Naive thymus-derived CD4-positive, alpha-beta T cell (primary cell): ENCODE measurements at regions of chr7 and their contacts with region 1.

Region 1: DNA sequence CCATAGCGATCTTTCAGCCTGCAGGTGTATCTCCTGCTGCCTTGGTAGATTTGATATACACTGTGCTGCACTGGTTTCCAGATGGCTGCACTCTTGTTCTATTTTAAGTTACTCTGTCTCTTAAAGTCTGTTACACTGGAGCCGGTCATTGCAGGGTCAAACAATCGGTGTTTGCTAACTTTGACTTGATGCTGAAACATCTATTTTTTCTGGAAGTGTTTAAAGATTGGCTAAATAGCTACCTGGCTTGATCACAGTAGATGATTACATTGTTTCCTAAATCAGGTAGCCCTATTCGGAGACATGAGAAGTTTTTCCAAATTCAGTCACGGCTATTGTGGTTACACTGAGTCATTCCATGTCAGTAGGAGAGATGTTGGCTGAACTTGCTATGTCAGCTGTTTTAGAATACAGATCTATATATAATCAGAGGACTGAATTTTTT is 574.8 kb downstream of the ETV1 start:
- DNase-seq: no peak
- ATAC-seq: no peak
- H3K4me3 ChIP-seq: no peak overlapping the region
- H3K4me3 Mint-ChIP-seq: no peak overlapping the region
- H3K27ac ChIP-seq: no peak overlapping the region
- H3K27ac Mint-ChIP-seq: no peak overlapping the region
- H3K4me1 ChIP-seq: no peaks in the 10 kb centered on the region
- H3K4me1 Mint-ChIP-seq: no peaks in the 10 kb centered on the region
- H3K27me3 ChIP-seq: no peaks in the 10 kb centered on the region
- H3K27me3 Mint-ChIP-seq: no peaks in the 10 kb centered on the region

Region 2: GRCh38 chr7:13236026-13236425 is 178.7 kb before region 1 on chr7:
- CTCF ChIA-PET with region 1: no interaction called
- POLR2A ChIA-PET with region 1: no interaction called
- intact Hi-C with region 1: no loop called
- DNase-seq: no peak
- ATAC-seq: no peak
- H3K4me3 ChIP-seq: no peak overlapping the region
- H3K4me3 Mint-ChIP-seq: no peak overlapping the region
- H3K27ac ChIP-seq: no peak overlapping the region
- H3K27ac Mint-ChIP-seq: no peak overlapping the region
- H3K4me1 ChIP-seq: no peaks in the 10 kb centered on the region
- H3K4me1 Mint-ChIP-seq: no peaks in the 10 kb centered on the region
- H3K27me3 ChIP-seq: no peaks in the 10 kb centered on the region
- H3K27me3 Mint-ChIP-seq: peaks cover 0 to 20% (median 4%) of the 10 kb centered on the region in 5 donors

Region 3: GRCh38 chr7:13447637-13448036 is 33.0 kb after region 1 on chr7:
- CTCF ChIA-PET with region 1: no interaction called
- POLR2A ChIA-PET with region 1: no interaction called
- intact Hi-C with region 1: loop called in 1 of 2 experiments (anchors 1 kb)
- DNase-seq: no peak
- ATAC-seq: no peak
- H3K4me3 ChIP-seq: no peak overlapping the region
- H3K4me3 Mint-ChIP-seq: no peak overlapping the region
- H3K27ac ChIP-seq: no peak overlapping the region
- H3K27ac Mint-ChIP-seq: no peak overlapping the region
- H3K4me1 ChIP-seq: no peaks in the 10 kb centered on the region
- H3K4me1 Mint-ChIP-seq: no peaks in the 10 kb centered on the region
- H3K27me3 ChIP-seq: no peaks in the 10 kb centered on the region
- H3K27me3 Mint-ChIP-seq: no peaks in the 10 kb centered on the region

Region 4: DNA sequence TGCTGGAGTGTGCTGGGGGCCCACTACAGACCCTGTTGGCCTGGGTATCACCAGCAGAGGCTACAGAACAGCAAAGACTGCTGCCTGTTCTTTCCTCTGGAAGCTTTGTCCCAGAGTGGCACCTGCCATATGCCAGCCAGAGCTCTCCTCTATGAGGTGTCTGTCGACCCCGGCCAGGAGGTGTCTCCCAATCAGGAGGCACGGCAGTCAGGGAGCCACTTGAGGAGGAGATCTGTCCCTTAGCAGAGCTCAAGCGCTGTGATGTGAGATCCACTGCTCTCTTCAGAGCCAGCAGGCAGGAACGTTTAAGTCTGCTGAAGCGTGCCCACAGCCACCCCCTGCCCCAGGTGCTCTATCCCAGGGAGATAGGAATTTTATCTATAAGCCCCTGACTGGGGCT is 258.6 kb after region 1 on chr7:
- CTCF ChIA-PET with region 1: no interaction called
- POLR2A ChIA-PET with region 1: no interaction called
- intact Hi-C with region 1: no loop called
- DNase-seq: no peak
- ATAC-seq: no peak
- H3K4me3 ChIP-seq: no peak overlapping the region
- H3K4me3 Mint-ChIP-seq: no peak overlapping the region
- H3K27ac ChIP-seq: no peak overlapping the region
- H3K27ac Mint-ChIP-seq: no peak overlapping the region
- H3K4me1 ChIP-seq: no peaks in the 10 kb centered on the region
- H3K4me1 Mint-ChIP-seq: no peaks in the 10 kb centered on the region
- H3K27me3 ChIP-seq: no peaks in the 10 kb centered on the region
- H3K27me3 Mint-ChIP-seq: peaks cover 0 to 6% (median 0%) of the 10 kb centered on the region in 5 donors